ENCODE measurements at regions of chrX and their contacts with region 1.

Region 1: GRCh38 chrX:118807151-118808017 is 16.2 kb upstream of the ZCCHC12 start:
- DNase-seq: peak; percentile 35 to 78
- H3K4me3 ChIP-seq: no peak overlapping the region
- H3K27ac ChIP-seq: no peak overlapping the region
- H3K4me1 ChIP-seq: peaks cover 0 to 7% (median 4%) of the 10 kb centered on the region in 4 donors
- H3K27me3 ChIP-seq: no peaks in the 10 kb centered on the region
- CTCF ChIP-seq: peak in 5 of 7 experiments; percentile 28 to 71 (median 52)
- EP300 ChIP-seq: no peak
- POLR2A ChIP-seq: no peak

Region 2: GRCh38 chrX:118286066-118286762 is 521.2 kb before region 1 on chrX:
- intact Hi-C with region 1: no loop called
- DNase-seq: peak in 1 of 2 donors; percentile 3
- H3K4me3 ChIP-seq: no peak overlapping the region
- H3K27ac ChIP-seq: no peak overlapping the region
- H3K4me1 ChIP-seq: no peaks in the 10 kb centered on the region
- H3K27me3 ChIP-seq: no peaks in the 10 kb centered on the region
- CTCF ChIP-seq: no peak
- EP300 ChIP-seq: no peak
- POLR2A ChIP-seq: no peak

Region 3: DNA sequence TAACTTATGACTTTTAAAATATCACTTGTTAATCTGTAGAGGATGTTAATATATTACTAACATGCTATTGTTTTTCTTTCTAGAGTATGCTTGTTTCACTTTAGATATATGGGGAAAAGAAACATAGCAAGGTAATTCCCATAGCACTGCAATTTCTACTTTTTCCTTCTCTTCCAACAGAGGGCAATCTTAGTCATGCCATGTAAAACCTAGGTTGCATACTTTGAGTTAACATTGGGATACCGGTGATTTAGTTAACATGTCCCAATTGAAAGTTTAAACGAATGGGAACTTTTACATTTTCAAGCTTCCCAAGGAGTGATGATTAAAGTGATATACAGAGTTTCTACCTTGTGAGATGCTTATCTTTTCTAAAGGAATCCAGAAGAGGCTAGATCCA is 169.4 kb before region 1 on chrX:
- intact Hi-C with region 1: loop called (anchors 10 kb)
- DNase-seq: peak in 1 of 2 donors; percentile 10
- H3K4me3 ChIP-seq: no peak overlapping the region
- H3K27ac ChIP-seq: no peak overlapping the region
- H3K4me1 ChIP-seq: no peaks in the 10 kb centered on the region
- H3K27me3 ChIP-seq: peaks cover 0 to 5% (median 0%) of the 10 kb centered on the region in 3 donors
- CTCF ChIP-seq: no peak
- EP300 ChIP-seq: no peak
- POLR2A ChIP-seq: no peak

Region 4: DNA sequence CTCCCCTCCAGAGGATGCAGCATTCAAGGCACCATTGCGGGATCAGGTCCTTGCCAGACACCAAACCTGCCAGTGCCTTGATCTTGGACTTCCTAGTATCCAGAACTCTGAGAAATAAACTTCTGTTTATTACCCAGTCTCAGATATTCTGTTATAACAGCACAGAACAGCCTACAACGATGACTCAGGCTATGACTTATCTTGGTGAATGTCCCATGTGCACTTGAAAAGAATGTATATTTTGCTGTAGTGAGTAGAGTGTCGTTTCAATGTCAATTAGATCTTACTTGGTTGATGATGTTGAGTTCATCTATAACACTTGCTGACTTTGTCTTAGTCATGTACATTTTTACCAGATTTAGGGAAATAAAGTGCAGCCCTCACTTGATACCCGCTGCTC is 394.2 kb after region 1 on chrX:
- intact Hi-C with region 1: no loop called
- DNase-seq: no peak
- H3K4me3 ChIP-seq: no peak overlapping the region
- H3K27ac ChIP-seq: no peak overlapping the region
- H3K4me1 ChIP-seq: no peaks in the 10 kb centered on the region
- H3K27me3 ChIP-seq: no peaks in the 10 kb centered on the region
- CTCF ChIP-seq: no peak
- EP300 ChIP-seq: no peak
- POLR2A ChIP-seq: no peak